Left ventricle myocardium superior (tissue), 1 donor: ENCODE measurements at regions of chr4 and their contacts with region 1.

Region 1: DNA sequence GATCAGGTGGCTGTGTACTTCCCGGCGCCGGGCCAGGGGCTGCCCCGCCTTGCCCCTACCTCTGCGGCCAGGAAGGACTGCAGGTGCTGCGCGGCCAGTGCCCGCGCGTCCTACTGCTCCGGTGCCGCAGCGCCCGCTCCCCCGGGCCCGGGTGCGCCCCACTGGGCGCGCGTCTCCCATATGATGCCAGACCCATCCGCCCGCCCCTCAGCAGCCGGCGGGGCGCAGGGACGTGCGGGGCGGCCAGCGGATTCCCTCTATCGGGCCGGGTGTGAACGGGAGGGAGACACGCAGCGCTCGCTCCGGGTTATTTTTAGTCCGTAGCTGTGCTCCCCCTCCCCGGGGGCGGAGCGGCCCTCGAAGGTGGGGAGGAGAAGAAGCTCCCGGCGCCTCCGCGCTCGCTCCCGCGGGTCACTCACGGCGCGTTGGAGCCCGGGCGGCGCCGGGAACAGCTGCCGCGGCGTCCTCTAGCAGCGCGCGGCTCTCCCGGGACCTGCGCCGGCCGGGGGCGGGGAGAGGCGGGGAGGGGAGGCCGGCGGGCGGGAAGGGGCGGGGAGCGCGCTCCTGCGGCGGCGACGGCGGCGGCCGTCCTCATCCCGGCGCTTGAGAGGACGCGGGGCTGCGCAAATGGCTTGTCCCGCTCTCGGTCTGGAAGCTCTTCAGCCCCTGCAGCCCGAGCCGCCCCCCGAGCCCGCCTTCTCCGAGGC is 103.6 kb downstream of the UCHL1 start:
- DNase-seq: peak; percentile 92
- ATAC-seq: peak; percentile 87

Region 2: GRCh38 chr4:41418444-41418843 is 58.1 kb after region 1 on chr4:
- intact Hi-C with region 1: loop called (anchors 10 kb)
- DNase-seq: peak; percentile 89
- ATAC-seq: peak; percentile 96

Region 3: GRCh38 chr4:41632481-41633073 is 272.2 kb after region 1 on chr4:
- intact Hi-C with region 1: no loop called
- DNase-seq: peak; percentile 25
- ATAC-seq: peak; percentile 9